Panc1 (cell line): ENCODE measurements at regions of chr6 and their contacts with region 1.

Region 1: DNA sequence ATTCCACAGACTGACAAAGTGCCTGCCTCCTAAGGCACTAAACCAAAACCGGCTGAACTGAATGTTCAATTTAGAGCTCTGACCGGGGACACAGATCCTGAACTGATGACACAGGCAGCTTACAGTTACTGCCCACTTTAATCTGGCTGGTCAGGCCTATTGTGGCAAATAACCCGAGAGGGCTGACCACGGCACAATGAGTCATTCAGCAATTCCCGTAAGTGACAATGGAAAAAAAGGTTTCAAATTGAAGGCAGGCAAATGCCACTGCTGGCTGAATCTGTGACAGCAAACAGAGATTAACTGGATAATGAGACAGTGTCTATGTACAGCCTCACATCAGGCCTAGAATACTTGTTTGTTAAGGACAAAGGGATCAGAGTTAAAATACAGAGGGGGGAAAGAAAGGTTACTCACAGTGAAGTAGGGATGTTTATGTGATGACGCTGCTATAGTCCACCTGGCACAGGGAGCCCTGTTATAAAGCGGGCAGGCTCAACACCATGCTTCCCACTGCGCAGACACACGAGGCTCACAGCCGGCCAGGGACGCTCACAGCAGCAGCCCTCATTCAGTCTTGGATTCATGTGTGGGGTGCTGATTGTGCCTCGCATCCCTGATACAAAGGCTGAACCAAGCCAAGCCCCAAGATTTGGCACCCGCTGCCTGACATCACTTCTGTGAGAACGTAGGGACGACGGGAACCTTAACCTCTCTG is 54.4 kb downstream of the RTN4IP1 start:
- DNase-seq: peak; percentile 38
- ATAC-seq: peak; percentile 63
- H3K4me3 ChIP-seq: no peak overlapping the region
- H3K27ac ChIP-seq: no peak overlapping the region
- H3K4me1 ChIP-seq: no peaks in the 10 kb centered on the region
- H3K27me3 ChIP-seq: no peaks in the 10 kb centered on the region
- CTCF ChIP-seq: no peak

Region 2: GRCh38 chr6:106643061-106643460 is 68.2 kb after region 1 on chr6:
- CTCF ChIA-PET with region 1: no interaction called
- POLR2A ChIA-PET with region 1: no interaction called
- in situ Hi-C with region 1: no loop called
- intact Hi-C with region 1: no loop called
- DNase-seq: no peak
- ATAC-seq: no peak
- H3K4me3 ChIP-seq: no peak overlapping the region
- H3K27ac ChIP-seq: no peak overlapping the region
- H3K4me1 ChIP-seq: no peaks in the 10 kb centered on the region
- H3K27me3 ChIP-seq: no peaks in the 10 kb centered on the region
- CTCF ChIP-seq: no peak

Region 3: DNA sequence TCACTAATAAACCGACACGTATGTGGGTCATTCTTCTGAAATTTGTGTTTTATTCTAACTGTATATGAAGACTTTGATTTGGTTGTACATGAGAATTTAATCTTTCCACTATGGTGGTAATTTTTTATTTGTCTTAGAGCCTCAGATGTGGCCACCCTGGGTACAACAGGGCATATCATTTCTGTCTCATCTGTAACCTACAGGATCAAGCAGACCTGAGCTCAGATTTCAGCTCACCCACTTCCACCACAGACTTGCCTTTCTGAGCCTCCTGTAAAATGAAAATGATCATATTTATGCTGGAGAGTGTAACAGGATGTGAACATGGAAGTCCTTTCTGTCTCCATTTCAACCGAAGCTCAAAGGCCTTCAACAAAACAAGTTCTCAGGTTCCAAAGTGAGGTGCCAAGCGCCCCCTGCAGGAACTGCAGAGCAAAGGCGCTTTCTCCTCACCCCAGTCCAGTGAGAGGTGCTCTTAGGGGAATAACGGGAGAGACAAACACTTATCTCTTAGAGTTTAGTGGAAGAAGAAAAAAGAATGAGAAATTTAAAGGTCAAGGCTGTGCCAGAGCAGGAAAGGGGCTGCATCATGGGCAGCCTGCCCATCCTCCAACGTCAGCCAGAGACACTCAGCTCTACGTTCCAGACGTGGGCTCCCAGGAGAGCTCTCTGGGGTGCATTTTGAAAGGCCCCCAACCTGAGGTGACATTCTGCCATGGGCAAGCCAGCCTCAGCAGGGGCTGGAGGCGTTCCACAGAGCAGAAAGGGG is 422.7 kb after region 1 on chr6:
- CTCF ChIA-PET with region 1: interaction called, 10 read pairs
- POLR2A ChIA-PET with region 1: no interaction called
- in situ Hi-C with region 1: no loop called
- intact Hi-C with region 1: no loop called
- DNase-seq: peak; percentile 42
- ATAC-seq: peak; percentile 90
- H3K4me3 ChIP-seq: no peak overlapping the region
- H3K27ac ChIP-seq: no peak overlapping the region
- H3K4me1 ChIP-seq: no peaks in the 10 kb centered on the region
- H3K27me3 ChIP-seq: no peaks in the 10 kb centered on the region
- CTCF ChIP-seq: peak; percentile 99